Mammary epithelial cell (primary cell): ENCODE measurements at regions of chr1 and their contacts with region 1.

Region 1: GRCh38 chr1:169928438-169929209 is 34.9 kb upstream of the SCYL3 start:
- DNase-seq: peak; percentile 32
- H3K4me3 ChIP-seq: no peak overlapping the region
- H3K27ac ChIP-seq: no peak overlapping the region
- H3K4me1 ChIP-seq: no peaks in the 10 kb centered on the region
- H3K27me3 ChIP-seq: no peaks in the 10 kb centered on the region
- CTCF ChIP-seq: peak; percentile 59 to 65

Region 2: GRCh38 chr1:170531758-170532657 is 603.4 kb after region 1 on chr1 and contains the start of gene GORAB:
- CTCF ChIA-PET with region 1: no interaction called
- dilution Hi-C with region 1: no loop called
- in situ Hi-C with region 1: no loop called
- intact Hi-C with region 1: loop called (anchors 5 kb)
- DNase-seq: peak; percentile 92
- H3K4me3 ChIP-seq: peak within 1 kb of the TSS; percentile 47 to 82 (median 81)
- H3K27ac ChIP-seq: peak within 1 kb of the TSS; percentile 97
- H3K4me1 ChIP-seq: peaks cover 8% of the 10 kb centered on the region
- H3K27me3 ChIP-seq: no peaks in the 10 kb centered on the region
- CTCF ChIP-seq: no peak
- total RNA-seq, gene GORAB: 8.3 to 9.2 TPM

Region 3: DNA sequence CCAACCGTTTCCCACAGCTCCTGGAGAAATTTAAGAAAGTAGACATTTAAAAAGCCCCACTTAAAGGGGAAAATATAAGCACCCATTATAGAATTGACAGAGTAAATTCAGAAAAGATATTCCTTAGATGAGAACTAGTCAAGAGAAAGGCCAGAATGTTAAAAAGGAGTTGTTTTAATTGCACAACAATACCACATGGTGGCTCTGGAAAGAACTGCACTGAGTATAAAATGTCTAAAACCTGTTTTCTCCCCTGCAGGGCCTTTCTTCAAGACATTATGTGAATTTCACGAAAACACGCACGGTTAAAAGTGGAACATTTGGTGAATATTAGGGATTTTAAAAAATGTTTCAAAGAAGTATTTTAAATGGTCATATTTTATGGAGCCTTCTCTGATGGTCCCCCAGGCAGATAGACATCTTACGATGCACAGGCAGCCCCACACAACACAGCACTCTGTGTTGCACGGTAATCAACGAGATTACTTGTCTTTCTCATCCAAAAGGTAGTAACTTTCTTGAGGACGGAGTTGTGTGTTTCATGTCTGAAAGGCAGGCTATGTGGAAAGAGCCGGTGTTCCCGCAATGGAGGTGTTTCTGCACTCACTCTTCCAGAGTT is 837.2 kb after region 1 on chr1:
- CTCF ChIA-PET with region 1: no interaction called
- dilution Hi-C with region 1: no loop called
- in situ Hi-C with region 1: no loop called
- intact Hi-C with region 1: loop called (anchors 1 kb)
- DNase-seq: peak; percentile 8
- H3K4me3 ChIP-seq: no peak overlapping the region
- H3K27ac ChIP-seq: no peak overlapping the region
- H3K4me1 ChIP-seq: no peaks in the 10 kb centered on the region
- H3K27me3 ChIP-seq: no peaks in the 10 kb centered on the region
- CTCF ChIP-seq: peak; percentile 51 to 66

Region 4: GRCh38 chr1:170929835-170930554 is 1001.4 kb after region 1 on chr1:
- CTCF ChIA-PET with region 1: no interaction called
- dilution Hi-C with region 1: no loop called
- in situ Hi-C with region 1: no loop called
- intact Hi-C with region 1: loop called (anchors 1 kb)
- DNase-seq: peak; percentile 54
- H3K4me3 ChIP-seq: no peak overlapping the region
- H3K27ac ChIP-seq: peak overlapping the region; percentile 62
- H3K4me1 ChIP-seq: peaks cover 18% of the 10 kb centered on the region
- H3K27me3 ChIP-seq: no peaks in the 10 kb centered on the region
- CTCF ChIP-seq: peak; percentile 70 to 79